T-cell (primary cell): ENCODE measurements at regions of chr19 and their contacts with region 1.

Region 1: DNA sequence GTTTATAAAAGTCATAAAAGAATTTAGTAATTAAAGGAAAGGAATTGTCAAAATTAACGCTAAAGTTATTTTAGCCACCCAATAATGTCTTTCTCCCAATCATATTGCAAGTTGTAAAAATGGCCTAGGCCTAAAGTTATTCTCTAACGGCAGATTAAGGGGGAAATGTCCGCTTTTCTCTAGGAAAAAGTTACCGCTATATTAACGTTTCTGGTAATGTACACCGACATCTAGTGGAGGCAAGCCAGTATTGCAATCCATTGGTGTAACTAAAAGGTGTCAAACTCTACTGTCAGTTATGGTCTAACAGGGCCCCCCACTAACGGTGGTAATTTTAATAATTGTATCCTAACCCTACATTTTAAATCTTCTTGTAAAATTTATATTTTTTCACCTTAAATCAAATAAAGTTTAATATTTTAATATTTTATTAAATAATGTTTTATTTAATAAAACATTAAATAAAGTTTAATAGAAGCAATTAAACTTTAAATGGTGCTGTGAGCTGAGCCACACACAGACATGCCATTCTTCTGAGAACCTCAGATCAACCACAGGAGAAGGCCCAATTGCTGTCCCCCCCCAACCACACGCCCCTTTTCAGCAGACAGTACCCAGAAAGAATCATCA is 35.9 kb upstream of the ZSCAN5A start:
- DNase-seq: peak in 29 of 35 experiments; percentile 4 to 71 (median 32)
- ATAC-seq: peak in 1 of 4 experiments; percentile 49
- H3K4me3 ChIP-seq: no peak overlapping the region
- H3K4me3 Mint-ChIP-seq: no peak overlapping the region
- H3K27ac ChIP-seq: no peak overlapping the region
- H3K27ac Mint-ChIP-seq: no peak overlapping the region
- H3K4me1 ChIP-seq: no peaks in the 10 kb centered on the region
- H3K4me1 Mint-ChIP-seq: peaks cover 0 to 2% (median 0%) of the 10 kb centered on the region in 3 donors
- H3K27me3 ChIP-seq: no peaks in the 10 kb centered on the region
- H3K27me3 Mint-ChIP-seq: no peaks in the 10 kb centered on the region

Region 2: DNA sequence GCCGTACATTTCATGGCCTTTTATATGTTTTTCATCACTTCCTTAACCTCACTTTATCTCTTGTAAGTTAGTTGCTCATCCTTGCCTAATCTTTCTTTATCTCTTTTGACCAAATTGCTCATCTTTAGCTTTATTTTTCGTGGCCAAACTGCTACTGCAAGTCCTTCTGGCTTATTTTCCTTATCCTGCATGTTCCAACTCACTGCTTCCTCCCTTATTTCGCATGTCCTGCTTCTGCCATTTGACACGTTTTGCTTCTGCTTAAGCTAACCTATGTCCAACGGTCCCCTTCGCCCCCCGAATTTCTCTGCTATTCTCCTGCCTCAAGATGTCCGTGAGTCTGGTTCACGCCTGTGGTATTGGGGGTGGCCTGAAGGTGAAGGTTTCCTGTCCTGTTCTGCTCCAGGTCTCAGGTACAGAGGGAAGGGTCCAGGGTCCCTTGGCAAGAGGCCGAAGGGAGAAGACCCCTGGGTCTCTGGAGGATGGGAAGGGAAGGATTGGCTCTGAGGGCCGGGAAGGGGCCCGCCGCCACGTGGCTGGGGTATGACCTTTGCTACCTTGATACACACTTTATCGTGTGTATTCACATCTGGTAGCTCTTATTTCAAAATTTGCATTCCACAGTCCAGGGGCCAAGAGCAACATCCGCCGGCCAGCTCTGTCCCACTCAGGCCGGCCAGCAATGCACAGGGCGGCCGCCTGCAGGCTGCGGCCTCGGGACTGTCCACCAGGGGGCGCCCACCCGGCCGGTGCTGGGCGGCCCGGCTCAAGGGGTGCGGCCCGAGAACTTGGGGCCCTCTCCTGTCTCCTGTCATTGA is 883.1 kb before region 1 on chr19:
- CTCF ChIA-PET with region 1: no interaction called
- POLR2A ChIA-PET with region 1: interaction called in 1 of 2 experiments, 14 read pairs
- DNase-seq: peak in 27 of 35 experiments; percentile 20 to 78 (median 50)
- ATAC-seq: peak; percentile 84 to 96 (median 90)
- H3K4me3 ChIP-seq: no peak overlapping the region
- H3K4me3 Mint-ChIP-seq: no peak overlapping the region
- H3K27ac ChIP-seq: no peak overlapping the region
- H3K27ac Mint-ChIP-seq: peak overlapping the region in 1 of 2 donors; percentile 23
- H3K4me1 ChIP-seq: peaks cover 0 to 6% of the 10 kb centered on the region in 2 experiments
- H3K4me1 Mint-ChIP-seq: peaks cover 3 to 9% (median 6%) of the 10 kb centered on the region in 3 donors
- H3K27me3 ChIP-seq: peaks cover 0 to 9% of the 10 kb centered on the region in 2 experiments
- H3K27me3 Mint-ChIP-seq: no peaks in the 10 kb centered on the region

Region 3: GRCh38 chr19:56383826-56384605 is 33.5 kb after region 1 on chr19:
- CTCF ChIA-PET with region 1: no interaction called
- POLR2A ChIA-PET with region 1: no interaction called
- DNase-seq: no peak
- ATAC-seq: no peak
- H3K4me3 ChIP-seq: no peak overlapping the region
- H3K4me3 Mint-ChIP-seq: no peak overlapping the region
- H3K27ac ChIP-seq: no peak overlapping the region
- H3K27ac Mint-ChIP-seq: no peak overlapping the region
- H3K4me1 ChIP-seq: no peaks in the 10 kb centered on the region
- H3K4me1 Mint-ChIP-seq: no peaks in the 10 kb centered on the region
- H3K27me3 ChIP-seq: no peaks in the 10 kb centered on the region
- H3K27me3 Mint-ChIP-seq: no peaks in the 10 kb centered on the region